ENCODE measurements at regions of chr7 and their contacts with region 1.

Region 1: GRCh38 chr7:101729241-101729993 is 88.0 kb upstream of the CUX1 start:
- DNase-seq: peak; percentile 97
- ATAC-seq: peak; percentile 95
- H3K4me3 ChIP-seq: no peak overlapping the region
- H3K27ac ChIP-seq: peak overlapping the region; percentile 82
- H3K4me1 ChIP-seq: peaks cover 8% of the 10 kb centered on the region; the same call in 1 of the 2 replicates
- H3K27me3 ChIP-seq: 0 out of 2 replicates have a peak, but pooled peaks cover 2% of the 10 kb centered on the region
- CTCF ChIP-seq: no peak
- POLR2A ChIP-seq: no peak
- RAD21 ChIP-seq: no peak

Region 2: DNA sequence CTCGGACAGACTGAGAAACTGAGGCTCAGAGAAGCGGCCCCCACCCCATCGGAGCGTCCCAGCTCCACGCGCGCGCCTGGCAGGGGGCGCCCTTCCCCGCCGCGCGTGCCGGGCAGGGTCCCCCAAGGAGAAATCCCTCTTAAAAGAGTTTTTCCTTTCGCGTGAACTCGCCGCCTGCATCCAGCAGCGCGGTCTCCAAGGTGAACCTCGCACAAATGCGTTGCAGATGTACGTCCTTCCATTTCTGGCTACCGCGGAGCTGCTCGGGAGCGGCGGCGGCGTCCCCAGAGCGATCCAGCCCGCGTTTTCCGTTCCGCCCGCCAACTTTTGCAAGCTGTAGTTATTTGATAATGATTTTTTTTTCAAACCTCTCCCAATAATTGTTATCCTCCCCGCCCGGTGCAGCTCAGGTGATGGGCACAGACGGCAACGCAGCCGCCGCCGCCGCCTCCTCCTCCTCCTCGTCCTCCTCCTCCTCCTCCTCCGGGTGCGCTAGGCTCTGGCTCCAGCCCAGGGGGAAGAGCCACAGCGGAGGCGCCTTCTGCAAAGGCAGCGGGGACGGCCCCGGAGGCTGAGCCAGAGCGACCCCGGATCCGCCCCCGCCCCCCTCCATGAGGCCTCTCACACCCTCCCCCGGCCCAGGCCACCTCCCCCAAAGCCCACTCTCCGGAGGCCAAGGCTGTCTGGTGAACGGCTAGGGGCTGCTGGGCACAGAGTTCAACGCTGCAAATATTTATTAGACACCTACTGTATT is 14.0 kb after region 1 on chr7:
- CTCF ChIA-PET with region 1: interaction called, 11 read pairs
- POLR2A ChIA-PET with region 1: no interaction called
- dilution Hi-C with region 1: no loop called
- in situ Hi-C with region 1: no loop called
- intact Hi-C with region 1: no loop called
- DNase-seq: peak; percentile 49
- ATAC-seq: peak; percentile 79
- H3K4me3 ChIP-seq: peak overlapping the region; percentile 44
- H3K27ac ChIP-seq: no peak overlapping the region
- H3K4me1 ChIP-seq: peaks cover 3% of the 10 kb centered on the region; the same call in 1 of the 2 replicates
- H3K27me3 ChIP-seq: peaks cover 38% of the 10 kb centered on the region
- CTCF ChIP-seq: peak; percentile 41
- POLR2A ChIP-seq: no peak
- RAD21 ChIP-seq: no peak; the same call in 1 of the 2 replicates

Measured in IMR-90 (cell line).